B cell (primary cell): ENCODE measurements at regions of chr9 and their contacts with region 1.

Region 1: DNA sequence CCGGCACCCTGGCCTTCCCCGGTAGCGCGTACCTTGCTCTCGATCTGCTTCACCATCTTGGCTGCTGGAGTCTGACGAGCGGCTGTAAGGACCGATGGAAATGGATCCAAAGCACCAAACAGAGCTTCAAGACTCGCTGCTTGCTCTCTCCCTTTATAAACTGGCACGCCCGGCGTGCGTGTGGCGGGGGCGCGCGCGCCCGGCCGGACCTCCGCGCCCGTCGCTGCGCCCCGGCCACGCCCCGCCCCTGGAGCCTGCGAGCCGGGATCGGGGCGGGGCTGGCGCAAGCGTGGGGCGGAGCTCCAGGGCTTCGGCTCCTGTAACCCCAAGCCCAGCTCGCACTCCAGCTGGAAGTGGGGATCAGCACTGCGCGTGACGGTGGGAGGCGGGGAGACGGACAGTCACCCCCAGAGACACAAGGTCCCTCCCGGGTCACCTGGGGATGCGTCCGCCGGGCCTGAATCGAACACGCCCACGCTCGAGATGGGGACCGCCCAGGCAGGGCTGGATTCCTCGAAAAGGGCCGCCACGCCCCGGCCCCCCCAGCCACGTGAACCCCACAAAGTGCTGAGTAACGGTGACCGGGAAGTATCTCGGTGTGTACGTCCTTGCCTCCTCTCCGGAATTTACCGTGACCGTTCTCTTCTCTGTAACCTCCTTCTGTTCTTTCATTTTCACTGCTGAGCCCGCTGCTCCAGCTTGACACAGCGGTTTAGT is at the start of gene TXN:
- DNase-seq: peak; percentile 92
- ATAC-seq: peak; percentile 88
- H3K4me3 ChIP-seq: peak within 1 kb of the TSS; percentile 75 to 88 (median 83)
- H3K4me3 Mint-ChIP-seq: peak within 1 kb of the TSS; percentile 92
- H3K27ac ChIP-seq: peak within 1 kb of the TSS; percentile 36 to 66
- H3K27ac Mint-ChIP-seq: peak within 1 kb of the TSS; percentile 92
- H3K4me1 ChIP-seq: peaks cover 5 to 21% of the 10 kb centered on the region in 2 donors
- H3K4me1 Mint-ChIP-seq: peaks cover 26% of the 10 kb centered on the region
- H3K27me3 ChIP-seq: no peaks in the 10 kb centered on the region
- H3K27me3 Mint-ChIP-seq: no peaks in the 10 kb centered on the region
- CTCF ChIP-seq: no peak
- total RNA-seq, gene TXN: 29.0 and 30.6 TPM in 2 replicates

Region 2: DNA sequence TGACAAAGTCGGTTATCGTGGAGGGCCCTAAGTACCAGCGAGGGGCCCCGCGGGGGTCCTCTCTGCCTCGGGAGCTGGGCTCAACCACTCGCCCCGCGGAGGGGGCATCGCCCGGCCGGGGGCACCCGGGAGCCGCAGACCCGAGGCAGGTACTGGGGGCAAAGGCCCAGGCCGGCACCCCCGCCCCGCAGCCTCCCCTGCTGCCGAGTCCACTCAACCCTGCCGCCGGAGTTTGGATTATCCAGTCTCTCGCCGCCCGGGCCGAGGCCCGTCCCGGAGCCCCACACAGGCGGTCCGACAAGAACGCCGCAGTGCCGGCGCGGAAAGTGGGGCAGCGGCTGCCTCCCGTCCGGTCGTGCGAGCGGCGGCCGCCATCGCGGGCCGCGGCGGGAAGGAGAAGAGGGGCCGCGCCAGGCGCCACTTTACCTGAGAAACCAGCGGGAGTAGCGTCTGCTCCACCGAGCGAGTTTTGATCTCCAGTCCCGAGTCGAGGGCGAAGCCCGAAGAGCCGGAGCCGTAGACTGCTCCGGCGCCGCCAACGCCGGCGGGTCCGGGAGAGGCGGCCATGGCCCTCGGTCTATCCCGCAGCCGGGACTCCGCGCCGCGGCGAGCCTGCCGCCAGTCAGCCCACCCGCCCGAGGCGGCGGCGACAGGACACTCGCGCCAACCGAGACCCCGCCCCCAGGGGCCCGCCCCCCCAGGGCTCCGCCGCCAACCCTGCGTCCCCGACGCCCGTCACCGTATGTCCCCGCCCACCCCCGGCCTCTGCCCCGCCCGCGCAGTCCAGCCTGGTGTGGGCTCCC is 1243.5 kb before region 1 on chr9 and contains the start of gene CTNNAL1:
- CTCF ChIA-PET with region 1: no interaction called
- POLR2A ChIA-PET with region 1: no interaction called
- intact Hi-C with region 1: loop called (anchors 5 kb)
- DNase-seq: peak; percentile 87
- ATAC-seq: peak; percentile 97
- H3K4me3 ChIP-seq: peak within 1 kb of the TSS; percentile 43 to 80 (median 71)
- H3K4me3 Mint-ChIP-seq: peak within 1 kb of the TSS; percentile 94
- H3K27ac ChIP-seq: peak within 1 kb of the TSS; percentile 9 to 50
- H3K27ac Mint-ChIP-seq: peak within 1 kb of the TSS; percentile 90
- H3K4me1 ChIP-seq: peaks cover 16 to 19% of the 10 kb centered on the region in 2 donors
- H3K4me1 Mint-ChIP-seq: peaks cover 42% of the 10 kb centered on the region
- H3K27me3 ChIP-seq: peaks cover 0 to 16% (median 10%) of the 10 kb centered on the region in 4 experiments
- H3K27me3 Mint-ChIP-seq: peaks cover 6% of the 10 kb centered on the region
- CTCF ChIP-seq: no peak
- total RNA-seq, gene CTNNAL1: 1.5 and 2.3 TPM in 2 replicates

Region 3: GRCh38 chr9:110048403-110048975 is 208.0 kb before region 1 on chr9:
- CTCF ChIA-PET with region 1: no interaction called
- POLR2A ChIA-PET with region 1: no interaction called
- intact Hi-C with region 1: loop called (anchors 2 kb)
- DNase-seq: peak; percentile 91
- ATAC-seq: peak; percentile 95
- H3K4me3 ChIP-seq: peak overlapping the region; percentile 79 to 98 (median 88)
- H3K4me3 Mint-ChIP-seq: peak overlapping the region; percentile 98
- H3K27ac ChIP-seq: peak overlapping the region; percentile 40 to 71
- H3K27ac Mint-ChIP-seq: peak overlapping the region; percentile 93
- H3K4me1 ChIP-seq: peaks cover 42 to 47% of the 10 kb centered on the region in 2 donors
- H3K4me1 Mint-ChIP-seq: peaks cover 56% of the 10 kb centered on the region
- H3K27me3 ChIP-seq: no peaks in the 10 kb centered on the region
- H3K27me3 Mint-ChIP-seq: no peaks in the 10 kb centered on the region
- CTCF ChIP-seq: no peak

Region 4: DNA sequence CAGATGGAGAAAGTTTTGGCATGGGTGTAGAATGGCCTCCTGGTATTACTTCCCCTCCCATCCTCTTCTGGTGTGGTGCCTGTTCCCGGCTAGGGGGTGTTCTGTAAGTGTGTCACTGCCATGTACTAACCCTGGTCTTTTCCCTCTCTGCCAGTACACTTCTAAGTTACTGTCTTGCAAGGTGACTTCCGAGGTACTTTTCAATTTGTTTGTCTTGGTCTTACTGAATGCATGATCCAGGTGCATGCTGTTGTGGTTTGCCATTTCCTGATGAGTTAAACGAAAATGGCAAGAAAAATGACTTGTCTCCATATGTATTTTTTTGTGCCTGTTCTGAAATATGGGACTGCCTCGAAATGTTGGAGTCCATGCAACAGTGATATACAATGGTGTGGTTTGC is 94.6 kb before region 1 on chr9:
- CTCF ChIA-PET with region 1: no interaction called
- POLR2A ChIA-PET with region 1: no interaction called
- intact Hi-C with region 1: loop called (anchors 10 kb)
- DNase-seq: no peak
- ATAC-seq: no peak
- H3K4me3 ChIP-seq: no peak overlapping the region
- H3K4me3 Mint-ChIP-seq: peak overlapping the region; percentile 72
- H3K27ac ChIP-seq: peak overlapping the region; percentile 1 to 61
- H3K27ac Mint-ChIP-seq: peak overlapping the region; percentile 39
- H3K4me1 ChIP-seq: peaks cover 45 to 47% of the 10 kb centered on the region in 2 donors
- H3K4me1 Mint-ChIP-seq: peaks cover 77% of the 10 kb centered on the region
- H3K27me3 ChIP-seq: no peaks in the 10 kb centered on the region
- H3K27me3 Mint-ChIP-seq: no peaks in the 10 kb centered on the region
- CTCF ChIP-seq: no peak

Region 5: GRCh38 chr9:111483862-111484571 is 1227.5 kb after region 1 on chr9 and contains the start of gene ECPAS:
- CTCF ChIA-PET with region 1: no interaction called
- POLR2A ChIA-PET with region 1: no interaction called
- intact Hi-C with region 1: loop called (anchors 5 kb)
- DNase-seq: peak; percentile 83
- ATAC-seq: peak; percentile 60
- H3K4me3 ChIP-seq: peak within 1 kb of the TSS; percentile 68 to 92 (median 86)
- H3K4me3 Mint-ChIP-seq: peak within 1 kb of the TSS; percentile 78
- H3K27ac ChIP-seq: peak within 1 kb of the TSS; percentile 73 to 85
- H3K27ac Mint-ChIP-seq: peak within 1 kb of the TSS; percentile 70
- H3K4me1 ChIP-seq: peaks cover 7 to 9% of the 10 kb centered on the region in 2 donors
- H3K4me1 Mint-ChIP-seq: peaks cover 27% of the 10 kb centered on the region
- H3K27me3 ChIP-seq: peaks cover 0 to 2% (median 0%) of the 10 kb centered on the region in 4 experiments
- H3K27me3 Mint-ChIP-seq: peaks cover 7% of the 10 kb centered on the region
- CTCF ChIP-seq: no peak
- total RNA-seq, gene ECPAS: 66.7 and 69.5 TPM in 2 replicates